Endothelial cell of umbilical vein (primary cell): ENCODE measurements at regions of chr18 and their contacts with region 1.

Region 1: GRCh38 chr18:46073474-46074331 is 1.6 kb upstream of the PSTPIP2 start:
- DNase-seq: peak; percentile 75
- H3K4me3 ChIP-seq: no peak overlapping the region
- H3K27ac ChIP-seq: no peak overlapping the region
- H3K4me1 ChIP-seq: peaks cover 9% of the 10 kb centered on the region
- H3K27me3 ChIP-seq: no peaks in the 10 kb centered on the region
- CTCF ChIP-seq: peak; percentile 37 to 48
- POLR2A ChIP-seq: no peak

Region 2: GRCh38 chr18:45664824-45665763 is 408.6 kb before region 1 on chr18:
- CTCF ChIA-PET with region 1: interaction called, 148 read pairs
- POLR2A ChIA-PET with region 1: no interaction called
- dilution Hi-C with region 1: no loop called
- intact Hi-C with region 1: loop called (anchors 1 kb)
- DNase-seq: peak; percentile 65
- H3K4me3 ChIP-seq: no peak overlapping the region
- H3K27ac ChIP-seq: no peak overlapping the region
- H3K4me1 ChIP-seq: peaks cover 5% of the 10 kb centered on the region
- H3K27me3 ChIP-seq: no peaks in the 10 kb centered on the region
- CTCF ChIP-seq: peak; percentile 75 to 78
- POLR2A ChIP-seq: no peak

Region 3: GRCh38 chr18:45879681-45880655 is 193.7 kb before region 1 on chr18:
- CTCF ChIA-PET with region 1: interaction called, 28 read pairs
- POLR2A ChIA-PET with region 1: no interaction called
- dilution Hi-C with region 1: no loop called
- intact Hi-C with region 1: loop called (anchors 1 kb)
- DNase-seq: peak; percentile 75
- H3K4me3 ChIP-seq: no peak overlapping the region
- H3K27ac ChIP-seq: no peak overlapping the region
- H3K4me1 ChIP-seq: no peaks in the 10 kb centered on the region
- H3K27me3 ChIP-seq: no peaks in the 10 kb centered on the region
- CTCF ChIP-seq: peak; percentile 99 to 100
- POLR2A ChIP-seq: no peak

Region 4: GRCh38 chr18:45920367-45920766 is 153.3 kb before region 1 on chr18:
- CTCF ChIA-PET with region 1: interaction called, 24 read pairs
- POLR2A ChIA-PET with region 1: no interaction called
- dilution Hi-C with region 1: no loop called
- intact Hi-C with region 1: loop called (anchors 5 kb)
- DNase-seq: peak; percentile 72
- H3K4me3 ChIP-seq: no peak overlapping the region
- H3K27ac ChIP-seq: no peak overlapping the region
- H3K4me1 ChIP-seq: peaks cover 5% of the 10 kb centered on the region
- H3K27me3 ChIP-seq: no peaks in the 10 kb centered on the region
- CTCF ChIP-seq: no peak
- POLR2A ChIP-seq: no peak

Region 5: DNA sequence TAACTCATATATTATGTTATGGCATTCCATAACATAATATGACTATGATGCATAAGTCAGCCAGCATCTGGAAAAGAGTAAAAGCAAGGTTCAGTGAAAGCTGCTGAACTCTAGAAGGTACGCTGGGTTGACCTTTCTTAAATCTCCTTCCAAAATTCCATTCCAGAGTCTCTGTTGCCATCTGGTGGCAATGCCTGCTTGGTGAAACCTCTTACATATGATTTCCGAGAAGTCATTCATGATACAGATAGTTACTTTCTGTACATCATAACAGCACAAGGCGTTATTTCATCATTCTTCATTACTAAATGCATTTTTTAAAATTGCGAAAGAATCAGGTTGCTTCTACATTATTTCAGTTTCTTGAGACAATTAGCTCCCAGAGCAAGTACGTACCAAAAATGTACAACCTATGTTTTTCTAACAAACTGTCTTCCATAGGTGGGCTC is 99.6 kb before region 1 on chr18:
- CTCF ChIA-PET with region 1: interaction called, 49 read pairs
- POLR2A ChIA-PET with region 1: no interaction called
- dilution Hi-C with region 1: no loop called
- intact Hi-C with region 1: loop called (anchors 2 kb)
- DNase-seq: peak; percentile 71
- H3K4me3 ChIP-seq: no peak overlapping the region
- H3K27ac ChIP-seq: no peak overlapping the region
- H3K4me1 ChIP-seq: no peaks in the 10 kb centered on the region
- H3K27me3 ChIP-seq: no peaks in the 10 kb centered on the region
- CTCF ChIP-seq: peak; percentile 54 to 65
- POLR2A ChIP-seq: no peak

Region 6: GRCh38 chr18:46060359-46060841 is 13.3 kb before region 1 on chr18:
- CTCF ChIA-PET with region 1: interaction called, 13 read pairs
- POLR2A ChIA-PET with region 1: no interaction called
- dilution Hi-C with region 1: no loop called
- intact Hi-C with region 1: no loop called
- DNase-seq: no peak
- H3K4me3 ChIP-seq: no peak overlapping the region
- H3K27ac ChIP-seq: no peak overlapping the region
- H3K4me1 ChIP-seq: no peaks in the 10 kb centered on the region
- H3K27me3 ChIP-seq: no peaks in the 10 kb centered on the region
- CTCF ChIP-seq: no peak
- POLR2A ChIP-seq: no peak

Region 7: GRCh38 chr18:46097801-46098615 is 24.3 kb after region 1 on chr18 and contains the start of gene ATP5F1A:
- CTCF ChIA-PET with region 1: interaction called, 11 read pairs
- POLR2A ChIA-PET with region 1: no interaction called
- dilution Hi-C with region 1: no loop called
- intact Hi-C with region 1: no loop called
- DNase-seq: peak; percentile 89
- H3K4me3 ChIP-seq: peak within 1 kb of the TSS; percentile 67 to 96 (median 91)
- H3K27ac ChIP-seq: peak within 1 kb of the TSS; percentile 55
- H3K4me1 ChIP-seq: peaks cover 16% of the 10 kb centered on the region
- H3K27me3 ChIP-seq: no peaks in the 10 kb centered on the region
- CTCF ChIP-seq: peak in 1 of 2 donors; percentile 11
- POLR2A ChIP-seq: peak; percentile 76
- total RNA-seq, gene ATP5F1A: 374 and 405 TPM in 2 replicates

Region 8: GRCh38 chr18:46736135-46736534 is 662.4 kb after region 1 on chr18:
- CTCF ChIA-PET with region 1: no interaction called
- POLR2A ChIA-PET with region 1: no interaction called
- dilution Hi-C with region 1: no loop called
- intact Hi-C with region 1: no loop called
- DNase-seq: no peak
- H3K4me3 ChIP-seq: no peak overlapping the region
- H3K27ac ChIP-seq: no peak overlapping the region
- H3K4me1 ChIP-seq: no peaks in the 10 kb centered on the region
- H3K27me3 ChIP-seq: no peaks in the 10 kb centered on the region
- CTCF ChIP-seq: no peak
- POLR2A ChIP-seq: no peak